A673 (cell line): ENCODE measurements at regions of chr18 and their contacts with region 1.

Region 1: DNA sequence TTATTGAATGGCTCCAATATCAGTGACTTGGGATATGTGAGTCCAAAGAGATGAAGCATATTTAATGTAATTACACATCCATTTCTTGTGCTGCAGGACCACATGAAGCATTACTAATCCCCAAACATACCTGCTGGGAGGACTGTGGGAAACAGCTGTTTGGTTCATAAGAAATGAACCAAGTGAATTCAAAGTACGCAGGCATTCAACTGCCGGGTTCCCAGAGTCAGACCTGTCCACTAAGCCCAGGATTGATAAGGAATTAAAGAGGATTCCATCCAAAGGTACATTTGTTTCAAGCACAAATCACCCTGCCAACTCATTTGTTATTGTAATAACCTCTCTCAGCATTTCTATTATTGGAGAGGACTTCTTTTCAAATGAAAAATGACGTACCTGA is 230.7 kb downstream of the TXNL1 start:
- DNase-seq: no peak
- H3K4me3 ChIP-seq: no peak overlapping the region
- H3K27ac ChIP-seq: no peak overlapping the region
- H3K4me1 ChIP-seq: peaks cover 4% of the 10 kb centered on the region
- H3K27me3 ChIP-seq: no peaks in the 10 kb centered on the region
- CTCF ChIP-seq: no peak

Region 2: DNA sequence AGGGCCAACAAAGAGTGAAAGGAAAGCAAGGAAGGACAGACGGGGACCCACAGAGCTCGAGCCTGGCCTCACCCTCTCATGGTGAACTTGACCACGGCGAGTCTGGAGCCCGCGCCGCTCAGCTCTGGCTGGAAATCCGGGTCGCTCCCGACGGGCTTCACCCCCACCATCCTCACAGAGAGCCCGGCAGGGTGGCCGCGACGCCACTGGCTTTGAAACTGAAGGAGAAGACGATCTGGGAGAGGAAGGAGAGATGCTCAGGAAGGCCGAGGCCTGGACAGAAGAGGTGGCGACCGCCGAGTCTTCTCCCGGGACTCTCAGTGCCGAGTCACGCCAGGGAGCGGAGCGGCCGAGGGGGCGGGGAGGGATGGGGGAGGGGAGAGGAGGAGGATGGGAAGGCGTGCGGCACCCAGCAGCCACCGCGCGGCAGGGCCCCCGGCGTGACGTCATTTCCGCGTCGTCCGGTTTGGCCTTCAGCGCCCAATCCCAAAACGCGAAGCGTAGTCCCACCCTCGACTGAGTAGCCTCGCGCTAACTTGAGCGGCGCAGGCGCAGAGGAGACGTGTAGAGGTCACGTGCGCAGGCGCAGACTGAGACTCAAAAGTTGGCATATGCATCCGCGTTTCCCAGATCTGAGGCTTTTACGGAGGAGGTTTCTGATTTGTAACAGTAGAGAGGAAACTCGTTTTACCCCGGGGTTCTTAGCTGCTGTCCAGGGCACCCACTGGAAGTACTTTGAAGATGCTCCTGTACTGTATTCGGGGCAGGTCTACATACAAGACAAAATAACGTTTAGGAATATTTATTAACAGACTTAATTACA is 230.8 kb after region 1 on chr18 and contains the start of gene TXNL1:
- CTCF ChIA-PET with region 1: no interaction called
- POLR2A ChIA-PET with region 1: interaction called, 19 read pairs
- intact Hi-C with region 1: no loop called
- DNase-seq: peak; percentile 99
- H3K4me3 ChIP-seq: peak within 1 kb of the TSS; percentile 91
- H3K27ac ChIP-seq: peak within 1 kb of the TSS; percentile 97
- H3K4me1 ChIP-seq: peaks cover 9% of the 10 kb centered on the region
- H3K27me3 ChIP-seq: no peaks in the 10 kb centered on the region
- CTCF ChIP-seq: no peak
- total RNA-seq, gene TXNL1: 115 and 131 TPM in 2 replicates